Activated naive CD4-positive, alpha-beta T cell treated with anti-CD3 and anti-CD28 coated beads for 36 hours (primary cell): ENCODE measurements at regions of chr14 and their contacts with region 1.

Region 1: GRCh38 chr14:96567289-96567899 is 65.2 kb downstream of the PAPOLA start:
- DNase-seq: no peak
- H3K4me3 Mint-ChIP-seq: no peak overlapping the region
- H3K27ac Mint-ChIP-seq: no peak overlapping the region
- H3K4me1 Mint-ChIP-seq: no peaks in the 10 kb centered on the region
- H3K27me3 Mint-ChIP-seq: no peaks in the 10 kb centered on the region

Region 2: GRCh38 chr14:96666088-96666487 is 98.7 kb after region 1 on chr14:
- CTCF ChIA-PET with region 1: no interaction called
- intact Hi-C with region 1: loop called (anchors 1 kb)
- DNase-seq: no peak
- H3K4me3 Mint-ChIP-seq: no peak overlapping the region
- H3K27ac Mint-ChIP-seq: no peak overlapping the region
- H3K4me1 Mint-ChIP-seq: no peaks in the 10 kb centered on the region
- H3K27me3 Mint-ChIP-seq: peaks cover 19% of the 10 kb centered on the region

Region 3: DNA sequence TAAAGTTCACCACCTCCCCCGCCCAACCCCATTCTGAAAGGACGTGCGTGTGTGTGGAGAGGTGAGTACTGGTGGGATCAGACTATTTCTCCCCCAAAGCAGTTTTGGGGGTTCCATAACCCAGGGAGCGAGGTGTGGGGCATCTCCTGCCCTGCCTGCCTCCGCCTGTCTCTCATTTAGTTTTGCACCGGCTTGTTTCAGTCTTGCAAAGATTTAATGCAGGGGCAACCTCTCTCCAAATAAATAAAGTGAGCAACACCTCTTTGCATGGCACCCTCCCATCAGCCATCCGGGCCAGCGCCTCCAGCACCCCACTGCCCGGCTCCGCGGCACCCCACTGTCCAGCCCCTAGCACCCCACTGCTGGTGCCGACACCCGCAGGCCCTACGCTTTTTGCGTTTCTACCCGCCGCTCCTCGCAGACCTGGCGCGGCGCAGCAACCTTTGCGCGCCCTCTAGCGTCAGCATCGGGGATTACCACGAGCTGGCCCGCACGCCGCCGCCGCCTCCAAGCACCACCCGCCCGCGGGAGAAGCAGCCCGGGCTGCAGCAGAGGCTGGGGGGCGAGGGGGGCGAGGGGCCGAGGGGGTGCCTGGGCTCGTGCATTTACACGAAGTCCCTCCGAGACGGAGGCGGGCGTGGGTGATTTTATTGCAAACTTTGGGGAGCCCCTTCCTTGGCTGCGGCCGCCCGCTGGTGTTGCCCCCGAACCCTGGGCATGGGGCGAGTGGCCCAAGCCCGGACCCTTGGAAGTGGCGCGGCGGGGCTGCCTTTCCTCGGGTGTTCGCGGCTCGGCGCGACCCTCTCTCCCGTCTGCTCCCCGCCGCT is 174.0 kb after region 1 on chr14:
- CTCF ChIA-PET with region 1: interaction called, 5 read pairs
- intact Hi-C with region 1: loop called (anchors 1 kb)
- DNase-seq: peak; percentile 77
- H3K4me3 Mint-ChIP-seq: peak overlapping the region; percentile 60
- H3K27ac Mint-ChIP-seq: no peak overlapping the region
- H3K4me1 Mint-ChIP-seq: peaks cover 5% of the 10 kb centered on the region
- H3K27me3 Mint-ChIP-seq: peaks cover 67% of the 10 kb centered on the region